ENCODE measurements at regions of chr20 and their contacts with region 1.

Region 1: DNA sequence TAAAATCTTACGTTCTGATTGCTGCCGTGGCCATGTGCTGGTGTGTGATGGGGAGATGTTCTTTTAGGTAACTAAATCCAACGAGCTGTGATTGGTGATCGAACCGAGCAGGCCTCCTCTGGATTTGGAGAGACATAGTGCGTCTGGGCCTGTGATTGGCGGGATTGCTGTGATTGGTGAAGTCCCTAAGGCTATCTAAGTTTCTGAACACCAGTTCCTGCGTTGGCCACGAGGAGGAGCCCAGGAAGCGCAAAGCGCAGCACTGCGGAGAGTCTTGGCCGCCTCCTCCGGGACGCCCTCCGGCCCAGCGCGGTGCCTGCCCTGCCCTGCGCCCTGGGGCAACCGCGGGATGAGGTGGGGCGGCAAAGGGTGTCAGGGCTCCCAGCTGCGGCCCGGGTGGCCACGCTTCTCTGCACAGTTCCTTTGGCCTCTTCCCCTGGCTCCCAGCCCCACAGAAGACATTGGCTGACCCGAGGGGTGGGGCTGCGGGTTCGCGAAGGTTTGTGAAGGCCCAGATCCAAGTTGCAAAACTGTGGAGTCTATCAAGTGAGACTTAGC is 33.0 kb downstream of the HNF4A start:
- DNase-seq: peak; percentile 59
- ATAC-seq: peak; percentile 94
- H3K4me3 ChIP-seq: no peak overlapping the region
- H3K27ac ChIP-seq: no peak overlapping the region
- H3K4me1 ChIP-seq: no peaks in the 10 kb centered on the region
- H3K27me3 ChIP-seq: peaks cover 24% of the 10 kb centered on the region
- CTCF ChIP-seq: peak; percentile 87
- POLR2A ChIP-seq: no peak
- RAD21 ChIP-seq: peak; percentile 86

Region 2: GRCh38 chr20:44217342-44218092 is 171.0 kb before region 1 on chr20:
- CTCF ChIA-PET with region 1: interaction called, 3 read pairs
- POLR2A ChIA-PET with region 1: no interaction called
- dilution Hi-C with region 1: no loop called
- in situ Hi-C with region 1: no loop called
- intact Hi-C with region 1: loop called (anchors 1 kb)
- DNase-seq: peak; percentile 67
- ATAC-seq: peak; percentile 88
- H3K4me3 ChIP-seq: no peak overlapping the region
- H3K27ac ChIP-seq: no peak overlapping the region
- H3K4me1 ChIP-seq: no peaks in the 10 kb centered on the region
- H3K27me3 ChIP-seq: no peaks in the 10 kb centered on the region
- CTCF ChIP-seq: peak; percentile 88
- POLR2A ChIP-seq: no peak
- RAD21 ChIP-seq: peak; percentile 88

Region 3: GRCh38 chr20:44475694-44476560 is 87.4 kb after region 1 on chr20 and contains the start of gene TTPAL:
- CTCF ChIA-PET with region 1: interaction called, 4 read pairs
- POLR2A ChIA-PET with region 1: no interaction called
- dilution Hi-C with region 1: no loop called
- in situ Hi-C with region 1: no loop called
- intact Hi-C with region 1: loop called (anchors 1 kb)
- DNase-seq: peak; percentile 82
- ATAC-seq: peak; percentile 97
- H3K4me3 ChIP-seq: peak within 1 kb of the TSS; percentile 87
- H3K27ac ChIP-seq: peak within 1 kb of the TSS; percentile 90
- H3K4me1 ChIP-seq: peaks cover 4% of the 10 kb centered on the region; the same call in 1 of the 2 replicates
- H3K27me3 ChIP-seq: no peaks in the 10 kb centered on the region
- CTCF ChIP-seq: peak; percentile 38
- POLR2A ChIP-seq: peak; percentile 96
- RAD21 ChIP-seq: peak; percentile 34
- total RNA-seq, gene TTPAL: 8.2 and 11.9 TPM in 2 replicates

Region 4: GRCh38 chr20:44733341-44734069 is 345.0 kb after region 1 on chr20:
- CTCF ChIA-PET with region 1: no interaction called
- POLR2A ChIA-PET with region 1: no interaction called
- dilution Hi-C with region 1: no loop called
- in situ Hi-C with region 1: no loop called
- intact Hi-C with region 1: loop called (anchors 5 kb)
- DNase-seq: peak; percentile 65
- ATAC-seq: peak; percentile 73
- H3K4me3 ChIP-seq: no peak overlapping the region
- H3K27ac ChIP-seq: no peak overlapping the region
- H3K4me1 ChIP-seq: peaks cover 17% of the 10 kb centered on the region
- H3K27me3 ChIP-seq: no peaks in the 10 kb centered on the region
- CTCF ChIP-seq: peak; percentile 97
- POLR2A ChIP-seq: 0 out of 2 replicates have a peak, but pooled peaks have one; percentile 53
- RAD21 ChIP-seq: peak; percentile 99

Region 5: DNA sequence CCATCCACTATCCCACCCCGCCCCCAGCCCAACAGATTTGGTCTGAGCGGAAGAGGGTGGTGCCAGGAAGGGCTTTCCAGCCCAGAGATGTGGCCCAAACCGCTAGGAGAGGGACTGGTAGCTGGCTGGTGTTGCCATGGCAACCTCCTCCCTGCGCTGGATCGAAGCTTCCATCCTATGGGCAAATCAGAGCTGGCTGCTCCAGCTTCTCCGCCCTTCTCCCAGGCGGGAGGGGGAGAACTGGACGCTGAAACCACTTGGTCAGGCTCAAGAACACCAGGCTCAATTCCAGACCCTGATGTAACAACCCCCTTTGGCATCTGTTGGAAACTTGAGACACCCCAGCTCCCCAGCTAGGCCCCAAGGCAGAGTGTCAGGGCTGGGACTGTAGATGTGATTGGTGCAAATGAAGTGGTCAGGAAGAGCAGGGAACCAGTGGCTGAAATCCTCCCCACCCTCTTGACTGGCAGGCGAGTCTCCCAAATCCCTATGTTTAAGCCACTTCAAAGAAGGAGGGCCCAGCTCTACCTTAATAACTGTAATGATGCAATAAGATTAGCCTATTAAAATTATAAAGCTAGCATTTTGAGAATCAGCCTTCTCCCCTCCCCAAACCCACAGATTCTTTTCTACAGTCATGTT is 417.6 kb after region 1 on chr20:
- CTCF ChIA-PET with region 1: no interaction called
- POLR2A ChIA-PET with region 1: no interaction called
- dilution Hi-C with region 1: no loop called
- in situ Hi-C with region 1: no loop called
- intact Hi-C with region 1: no loop called
- DNase-seq: peak; percentile 25
- ATAC-seq: peak; percentile 65
- H3K4me3 ChIP-seq: no peak overlapping the region
- H3K27ac ChIP-seq: no peak overlapping the region
- H3K4me1 ChIP-seq: no peaks in the 10 kb centered on the region
- H3K27me3 ChIP-seq: peaks cover 60% of the 10 kb centered on the region
- CTCF ChIP-seq: no peak
- POLR2A ChIP-seq: no peak
- RAD21 ChIP-seq: no peak

Region 6: DNA sequence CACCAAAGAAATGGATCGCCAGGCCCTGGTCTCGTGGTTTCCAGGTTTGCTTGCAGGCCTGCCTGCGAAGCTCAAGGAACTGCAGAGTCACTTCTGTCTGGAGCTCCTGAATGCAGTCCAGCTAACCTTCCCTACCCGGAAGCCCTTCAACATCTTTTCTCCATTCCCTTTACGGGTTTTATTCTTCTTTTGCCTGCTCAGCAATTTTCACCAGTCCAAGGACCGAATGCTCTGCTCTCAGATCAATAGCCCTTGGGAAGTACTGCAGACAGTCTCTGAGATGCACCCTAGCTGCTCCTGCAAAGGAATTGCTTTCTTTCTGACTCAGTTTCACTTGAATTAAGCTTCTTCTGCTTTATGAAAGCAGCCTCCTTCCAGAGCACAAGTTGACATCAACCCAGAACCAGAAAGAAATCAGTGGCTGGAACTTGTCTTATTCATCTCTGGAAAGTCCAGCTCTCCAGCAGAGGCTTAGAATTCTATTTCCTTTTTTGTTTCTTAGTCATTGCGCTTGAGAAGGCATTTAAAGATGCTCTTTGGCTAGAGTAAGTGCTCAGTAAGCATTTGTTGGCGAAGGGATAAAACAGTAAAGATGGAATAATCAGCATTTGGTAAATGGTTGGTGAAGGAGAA is 478.3 kb after region 1 on chr20:
- CTCF ChIA-PET with region 1: no interaction called
- POLR2A ChIA-PET with region 1: no interaction called
- dilution Hi-C with region 1: no loop called
- in situ Hi-C with region 1: loop called (anchors 25 kb)
- intact Hi-C with region 1: loop called (anchors 2 kb)
- DNase-seq: no peak
- ATAC-seq: no peak
- H3K4me3 ChIP-seq: no peak overlapping the region
- H3K27ac ChIP-seq: no peak overlapping the region
- H3K4me1 ChIP-seq: no peaks in the 10 kb centered on the region
- H3K27me3 ChIP-seq: peaks cover 29% of the 10 kb centered on the region
- CTCF ChIP-seq: no peak
- POLR2A ChIP-seq: no peak
- RAD21 ChIP-seq: no peak